Prostate gland (tissue), 2 donors: ENCODE measurements at regions of chr12 and their contacts with region 1.

Region 1: DNA sequence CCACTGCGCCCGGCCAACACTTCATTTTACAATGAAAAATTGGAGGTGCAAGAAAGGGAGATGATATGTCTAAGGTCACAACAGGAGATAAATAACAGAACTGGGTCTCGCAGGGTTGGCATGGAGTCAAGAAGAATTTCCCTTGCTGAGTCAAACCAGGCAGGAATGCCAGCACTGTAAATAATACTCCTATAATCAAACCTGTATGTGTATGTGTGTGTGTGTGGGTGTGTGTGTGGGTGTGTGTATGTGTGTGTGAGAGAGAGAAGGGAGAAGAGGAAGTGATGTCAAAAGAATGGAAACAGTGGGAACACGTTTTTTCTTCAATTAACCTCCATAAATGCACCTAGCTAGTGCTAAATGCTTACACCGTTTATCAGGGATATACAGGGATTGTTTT is 70.4 kb downstream of the TMEM116 start:
- DNase-seq: no peak
- H3K4me3 ChIP-seq: no peak overlapping the region
- H3K27ac ChIP-seq: no peak overlapping the region
- H3K4me1 ChIP-seq: no peaks in the 10 kb centered on the region
- H3K27me3 ChIP-seq: no peaks in the 10 kb centered on the region
- CTCF ChIP-seq: no peak
- POLR2A ChIP-seq: no peak

Region 2: DNA sequence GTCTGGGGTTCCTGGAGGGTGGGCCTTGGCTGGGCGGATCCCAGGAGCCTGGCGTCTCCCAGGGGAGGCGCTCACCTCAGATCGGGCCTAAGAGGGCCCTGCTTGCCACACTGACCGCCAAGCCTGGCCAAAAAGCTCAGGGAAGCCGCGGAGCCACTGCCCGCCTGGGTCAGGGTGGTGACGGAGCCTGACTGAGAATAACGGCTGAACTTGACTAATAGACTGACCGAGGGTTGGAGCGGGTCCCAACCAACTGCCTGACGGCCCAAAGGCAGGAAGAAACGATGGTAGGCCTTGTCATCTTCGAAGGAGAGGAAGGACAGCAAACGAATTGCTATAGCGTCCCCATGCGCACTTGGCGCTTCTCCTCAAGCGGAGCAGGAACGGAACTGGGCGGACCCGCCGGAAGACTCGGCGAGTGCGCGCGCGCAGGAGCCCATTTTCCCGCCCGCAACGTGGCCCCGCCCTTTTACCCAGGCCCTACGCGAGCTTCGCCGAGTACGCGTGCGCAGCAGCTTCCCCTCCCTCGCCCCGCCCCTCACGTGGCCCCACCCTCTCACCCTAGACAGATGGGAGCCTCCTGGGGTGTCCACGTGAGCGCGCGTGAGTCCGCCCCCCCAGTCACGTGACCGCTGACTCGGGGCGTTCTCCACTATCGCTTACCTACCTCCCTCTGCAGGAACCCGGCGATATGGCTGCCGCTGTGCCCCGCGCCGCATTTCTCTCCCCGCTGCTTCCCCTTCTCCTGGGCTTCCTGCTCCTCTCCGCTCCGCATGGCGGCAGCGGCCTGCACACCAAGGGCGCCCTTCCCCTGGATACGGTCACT is 70.4 kb after region 1 on chr12 and contains the starts of genes ERP29 and TMEM116:
- intact Hi-C with region 1: loop called (anchors 5 kb)
- DNase-seq: peak; percentile 100
- H3K4me3 ChIP-seq: peak within 1 kb of the TSS; percentile 66 to 81
- H3K27ac ChIP-seq: peak within 1 kb of the TSS; percentile 96 to 97
- H3K4me1 ChIP-seq: peaks cover 4% of the 10 kb centered on the region
- H3K27me3 ChIP-seq: no peaks in the 10 kb centered on the region
- CTCF ChIP-seq: peak; percentile 47 to 85 (median 66)
- POLR2A ChIP-seq: peak; percentile 86
- total RNA-seq, gene ERP29: 89.1 to 131 TPM
- total RNA-seq, gene TMEM116: 5.5 to 16.8 TPM